ENCODE measurements at regions of chr19 and their contacts with region 1.

Region 1: DNA sequence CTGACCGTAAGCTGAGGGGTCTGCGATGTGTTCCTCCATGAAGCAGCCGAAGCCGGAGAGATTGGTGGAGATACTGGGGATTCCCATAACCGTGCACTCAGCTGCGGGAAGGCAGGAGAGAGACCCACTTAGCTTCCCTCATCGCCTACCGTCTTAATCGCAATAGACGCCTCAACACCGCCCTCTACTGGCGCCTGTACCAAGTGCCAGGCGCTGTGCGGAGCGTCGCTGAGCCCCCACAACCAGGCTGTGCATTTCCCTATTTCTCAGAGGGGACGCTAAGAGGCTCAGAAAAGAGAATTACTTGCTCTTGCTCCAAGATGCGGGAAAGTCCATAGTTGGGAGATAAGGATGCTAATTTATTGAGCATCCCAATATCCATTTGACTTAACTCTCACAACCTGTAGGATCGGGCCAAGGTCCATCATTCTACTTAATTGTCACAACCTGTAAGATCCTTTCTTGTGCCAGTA is 5.8 kb downstream of the FTL start:
- DNase-seq: peak; percentile 91
- H3K4me3 ChIP-seq: peak overlapping the region in 1 of 2 donors; percentile 7
- H3K27ac ChIP-seq: no peak overlapping the region
- H3K4me1 ChIP-seq: peaks cover 6% of the 10 kb centered on the region
- H3K27me3 ChIP-seq: no peaks in the 10 kb centered on the region
- CTCF ChIP-seq: peak; percentile 67 to 85 (median 85)
- POLR2A ChIP-seq: no peak

Region 2: GRCh38 chr19:48795055-48795684 is 175.8 kb before region 1 on chr19:
- intact Hi-C with region 1: loop called (anchors 10 kb)
- DNase-seq: peak; percentile 97
- H3K4me3 ChIP-seq: peak overlapping the region; percentile 19 to 61
- H3K27ac ChIP-seq: peak overlapping the region; percentile 83 to 84
- H3K4me1 ChIP-seq: peaks cover 12% of the 10 kb centered on the region
- H3K27me3 ChIP-seq: no peaks in the 10 kb centered on the region
- CTCF ChIP-seq: peak; percentile 94 to 98 (median 97)
- POLR2A ChIP-seq: no peak

Region 3: DNA sequence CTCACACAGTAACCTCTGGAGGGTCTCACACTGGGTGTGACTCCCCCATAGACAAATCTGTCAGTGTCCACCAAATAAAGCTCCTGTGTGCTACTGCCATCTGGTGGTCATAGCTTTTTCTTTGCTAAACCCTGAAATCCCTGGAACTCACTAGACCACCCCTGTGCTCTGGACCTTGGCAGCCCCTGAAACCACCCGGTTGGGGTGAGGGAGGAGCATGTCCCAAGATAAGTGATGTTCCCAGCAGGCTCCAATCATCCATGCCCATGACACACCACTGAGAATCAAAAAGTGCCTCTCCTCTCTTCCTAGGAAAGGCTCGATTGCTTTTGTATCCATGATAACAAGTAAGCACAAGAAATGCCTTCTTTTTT is 128.2 kb before region 1 on chr19:
- intact Hi-C with region 1: no loop called
- DNase-seq: peak; percentile 65
- H3K4me3 ChIP-seq: no peak overlapping the region
- H3K27ac ChIP-seq: no peak overlapping the region
- H3K4me1 ChIP-seq: no peaks in the 10 kb centered on the region
- H3K27me3 ChIP-seq: no peaks in the 10 kb centered on the region
- CTCF ChIP-seq: peak; percentile 71 to 85 (median 79)
- POLR2A ChIP-seq: no peak

Region 4: DNA sequence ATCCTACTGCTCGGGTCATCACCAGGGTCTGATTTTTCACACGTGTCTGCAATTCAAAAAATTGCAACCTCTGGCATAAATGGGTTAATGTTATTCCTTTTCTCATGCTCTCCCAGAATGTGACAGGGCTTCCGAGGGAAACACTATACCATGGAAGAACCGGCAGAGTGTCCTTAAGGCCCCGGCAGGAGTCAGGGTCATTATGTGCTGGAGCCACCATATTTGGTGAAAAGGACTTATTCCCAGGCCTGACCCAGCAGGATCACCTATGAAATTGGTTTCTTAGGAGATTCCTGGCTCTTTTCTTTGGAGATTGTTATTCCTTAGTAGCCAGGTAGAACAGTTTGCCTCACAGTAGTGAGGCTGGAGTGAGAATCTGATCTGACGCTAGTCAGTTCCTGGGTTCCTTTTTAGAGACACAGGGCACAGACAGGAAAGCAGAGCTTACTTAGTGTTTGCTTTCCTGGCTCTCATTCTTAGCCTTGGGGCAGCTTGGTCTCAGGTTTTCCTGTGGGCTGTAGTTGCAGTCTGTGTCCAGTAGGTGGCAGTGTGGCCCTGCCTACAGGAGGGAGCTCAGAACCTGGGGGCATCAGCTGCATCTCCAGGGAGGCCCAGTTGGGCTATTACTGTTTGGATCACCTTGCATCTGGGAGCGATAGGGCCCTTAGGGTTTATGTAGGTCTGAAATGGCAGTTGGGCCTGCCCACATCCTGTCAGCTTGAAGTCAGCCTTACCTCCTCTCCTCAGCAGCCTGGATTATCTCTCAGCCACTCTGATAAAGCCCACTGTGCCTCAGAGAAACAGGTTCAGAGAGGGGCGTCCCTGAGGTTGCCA is 126.7 kb after region 1 on chr19:
- intact Hi-C with region 1: no loop called
- DNase-seq: peak; percentile 76
- H3K4me3 ChIP-seq: no peak overlapping the region
- H3K27ac ChIP-seq: no peak overlapping the region
- H3K4me1 ChIP-seq: peaks cover 18% of the 10 kb centered on the region
- H3K27me3 ChIP-seq: no peaks in the 10 kb centered on the region
- CTCF ChIP-seq: peak; percentile 93 to 99 (median 93)
- POLR2A ChIP-seq: no peak